ENCODE measurements at regions of chr3 and their contacts with region 1.

Region 1: GRCh38 chr3:39189959-39190269 is 2.5 kb downstream of the XIRP1 start:
- DNase-seq: peak; percentile 67
- ATAC-seq: peak; percentile 54
- H3K4me3 Mint-ChIP-seq: no peak overlapping the region
- H3K27ac Mint-ChIP-seq: no peak overlapping the region
- H3K4me1 Mint-ChIP-seq: peaks cover 2% of the 10 kb centered on the region
- H3K27me3 Mint-ChIP-seq: no peaks in the 10 kb centered on the region

Region 2: DNA sequence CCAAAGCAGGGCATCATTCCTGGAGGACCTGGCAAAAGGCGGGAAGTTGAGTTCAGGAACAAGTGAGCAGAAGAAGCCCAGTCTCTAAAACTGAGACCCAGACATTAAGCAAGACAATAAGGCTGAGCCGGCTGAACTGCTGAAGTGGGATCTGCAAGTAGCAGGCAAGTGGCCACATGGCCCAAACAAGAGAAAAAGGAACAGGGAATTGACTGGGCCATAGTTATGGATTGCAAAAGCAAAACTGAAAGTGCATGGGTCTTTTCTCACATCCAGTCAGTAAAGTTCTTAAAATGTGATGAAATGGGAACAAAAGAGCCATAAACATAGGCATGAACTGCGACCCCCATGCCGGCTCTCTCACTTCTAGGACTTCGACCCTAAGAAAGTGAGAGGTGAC is 239.3 kb before region 1 on chr3:
- CTCF ChIA-PET with region 1: no interaction called
- POLR2A ChIA-PET with region 1: no interaction called
- DNase-seq: no peak
- ATAC-seq: no peak
- H3K4me3 Mint-ChIP-seq: no peak overlapping the region
- H3K27ac Mint-ChIP-seq: no peak overlapping the region
- H3K4me1 Mint-ChIP-seq: no peaks in the 10 kb centered on the region
- H3K27me3 Mint-ChIP-seq: no peaks in the 10 kb centered on the region

Region 3: GRCh38 chr3:38960953-38961622 is 228.8 kb before region 1 on chr3:
- CTCF ChIA-PET with region 1: no interaction called
- POLR2A ChIA-PET with region 1: no interaction called
- DNase-seq: peak; percentile 28
- ATAC-seq: no peak
- H3K4me3 Mint-ChIP-seq: no peak overlapping the region
- H3K27ac Mint-ChIP-seq: no peak overlapping the region
- H3K4me1 Mint-ChIP-seq: no peaks in the 10 kb centered on the region
- H3K27me3 Mint-ChIP-seq: peaks cover 2% of the 10 kb centered on the region

Region 4: DNA sequence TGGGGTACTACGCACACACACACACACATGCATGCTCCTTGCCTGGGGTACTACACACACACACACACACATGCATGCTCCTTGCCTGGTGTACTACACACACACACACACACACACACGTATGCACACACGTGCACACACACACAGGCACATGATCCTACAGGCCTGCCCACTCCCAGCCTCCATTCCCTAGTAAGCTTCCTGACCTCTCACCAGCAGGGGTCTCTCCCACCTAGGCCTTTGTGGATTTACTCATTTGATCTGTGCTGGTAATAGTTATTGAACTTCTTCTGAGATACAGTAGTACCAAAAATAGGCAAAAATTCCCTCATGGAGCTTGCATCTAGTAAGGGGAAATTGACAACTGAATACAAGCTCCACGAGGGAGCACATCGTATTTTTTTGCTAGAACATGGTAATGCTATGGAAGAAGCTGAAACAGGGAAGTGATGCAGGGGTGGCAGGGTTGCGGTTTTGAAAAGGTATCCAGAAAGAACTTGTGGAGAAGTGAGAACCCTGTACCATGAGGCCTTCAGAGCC is 63.3 kb before region 1 on chr3:
- CTCF ChIA-PET with region 1: interaction called, 15 read pairs
- POLR2A ChIA-PET with region 1: no interaction called
- DNase-seq: peak; percentile 52
- ATAC-seq: peak; percentile 41
- H3K4me3 Mint-ChIP-seq: no peak overlapping the region
- H3K27ac Mint-ChIP-seq: no peak overlapping the region
- H3K4me1 Mint-ChIP-seq: peaks cover 28% of the 10 kb centered on the region
- H3K27me3 Mint-ChIP-seq: peaks cover 21% of the 10 kb centered on the region

Region 5: DNA sequence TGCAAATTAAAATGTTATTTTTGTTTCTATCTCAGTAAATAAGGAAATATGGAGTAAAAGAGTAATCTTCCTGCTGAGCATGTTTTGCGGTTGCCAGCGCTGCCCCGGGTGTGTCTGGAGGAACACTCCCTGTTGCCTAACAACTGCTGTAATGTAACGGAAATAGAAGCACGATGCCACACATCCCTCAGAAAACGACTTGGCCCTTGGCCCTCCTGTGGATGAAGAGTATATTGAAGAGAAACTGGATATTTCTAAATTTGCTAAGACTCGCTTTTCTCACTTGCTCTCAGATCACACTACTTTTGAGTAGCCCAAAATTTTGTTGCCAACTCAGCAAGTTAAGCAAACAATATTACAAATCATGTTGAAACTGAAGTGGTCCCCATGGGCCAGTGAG is 71.0 kb after region 1 on chr3:
- CTCF ChIA-PET with region 1: interaction called, 19 read pairs
- POLR2A ChIA-PET with region 1: no interaction called
- DNase-seq: peak; percentile 80
- ATAC-seq: peak; percentile 93
- H3K4me3 Mint-ChIP-seq: no peak overlapping the region
- H3K27ac Mint-ChIP-seq: no peak overlapping the region
- H3K4me1 Mint-ChIP-seq: peaks cover 26% of the 10 kb centered on the region
- H3K27me3 Mint-ChIP-seq: peaks cover 38% of the 10 kb centered on the region